ENCODE measurements at regions of chr10 and their contacts with region 1.

Region 1: DNA sequence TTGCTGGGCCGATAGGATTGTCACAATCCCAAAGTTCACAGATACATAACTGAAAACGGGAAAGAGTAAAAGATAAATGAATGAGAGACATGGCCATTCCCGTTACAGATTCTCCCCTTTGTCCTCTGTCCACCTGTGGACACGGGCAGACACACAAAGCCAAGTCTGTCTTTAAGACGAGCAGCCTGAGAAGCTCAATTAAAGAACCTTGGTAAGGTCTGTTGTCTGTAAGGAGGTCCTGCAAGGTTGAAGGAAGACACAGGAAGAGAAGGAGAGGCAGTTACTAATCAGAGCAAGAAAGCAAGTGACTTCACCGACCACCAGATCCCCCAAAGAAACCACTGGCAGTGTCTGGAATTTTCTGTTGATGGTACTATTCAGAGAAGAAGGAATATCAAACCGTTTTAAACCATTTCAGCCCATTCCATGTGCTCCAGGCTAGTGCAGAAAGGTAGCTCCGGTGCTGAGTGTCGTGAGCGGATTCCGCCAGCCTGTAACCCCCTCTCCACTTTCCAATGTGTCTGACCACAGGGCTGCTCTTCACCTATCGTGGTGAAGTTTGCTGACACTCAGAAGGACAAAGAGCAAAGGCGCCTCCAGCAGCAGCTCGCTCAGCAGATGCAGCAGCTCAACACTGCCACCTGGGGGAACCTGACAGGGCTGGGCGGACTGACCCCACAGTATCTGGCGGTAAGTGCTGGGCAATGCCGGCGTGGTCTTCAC is 252.6 kb downstream of the CELF2 start:
- DNase-seq: peak; percentile 38 to 47
- H3K4me3 ChIP-seq: no peak overlapping the region
- H3K27ac ChIP-seq: no peak overlapping the region
- H3K4me1 ChIP-seq: no peaks in the 10 kb centered on the region
- H3K27me3 ChIP-seq: peaks cover 48% of the 10 kb centered on the region
- CTCF ChIP-seq: peak; percentile 73

Region 2: GRCh38 chr10:9342885-9343570 is 1927.3 kb before region 1 on chr10:
- CTCF ChIA-PET with region 1: interaction called, 3 read pairs
- POLR2A ChIA-PET with region 1: no interaction called
- intact Hi-C with region 1: loop called (anchors 1 kb)
- DNase-seq: peak in 1 of 2 experiments; percentile 3
- H3K4me3 ChIP-seq: no peak overlapping the region
- H3K27ac ChIP-seq: no peak overlapping the region
- H3K4me1 ChIP-seq: no peaks in the 10 kb centered on the region
- H3K27me3 ChIP-seq: peaks cover 4% of the 10 kb centered on the region; the same call in 1 of the 2 replicates
- CTCF ChIP-seq: peak; percentile 64

Measured in PC-9 (cell line).